ENCODE measurements at regions of chr9 and their contacts with region 1.

Region 1: DNA sequence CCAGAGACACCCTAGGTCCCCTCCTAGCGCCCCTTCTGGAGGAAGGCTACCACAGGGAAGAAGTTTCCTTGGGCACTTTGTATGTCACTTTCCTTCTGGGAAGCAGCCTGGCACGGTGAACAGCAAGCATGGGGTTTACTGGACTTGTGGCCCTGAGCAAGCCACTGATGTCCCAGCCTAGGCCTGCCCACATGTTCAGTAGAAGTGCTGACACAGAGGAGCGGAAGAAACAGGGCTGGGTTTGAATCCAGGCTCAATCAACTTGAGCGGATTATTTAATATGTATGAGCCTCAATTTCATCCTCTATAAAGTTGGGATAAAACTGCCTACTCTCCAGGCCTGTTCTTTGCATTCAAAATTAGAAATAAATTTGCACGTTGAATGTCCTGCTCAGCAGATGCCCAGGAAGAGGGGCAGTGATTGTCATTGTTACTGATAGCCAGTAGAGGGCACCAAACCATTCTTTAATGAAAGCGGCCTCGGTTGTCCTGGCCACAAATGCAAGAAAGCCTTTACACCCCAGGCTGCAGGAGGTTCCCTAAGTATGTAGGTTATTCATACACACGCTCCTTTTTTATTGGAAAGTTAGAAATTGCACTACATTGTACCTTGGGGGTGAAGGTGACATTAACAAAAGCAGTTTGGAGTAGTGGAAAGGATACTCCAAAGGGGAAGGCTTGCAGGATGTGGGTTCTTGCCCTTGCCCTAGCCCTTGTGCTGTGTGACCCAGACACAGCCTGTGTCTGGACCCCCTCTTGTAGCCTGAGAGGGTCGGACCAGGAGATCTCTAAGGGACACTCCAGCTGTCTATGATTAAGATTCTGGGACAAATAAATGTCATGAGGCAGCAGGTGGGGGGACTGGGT is 13.4 kb upstream of the XPA start:
- DNase-seq: peak in 10 of 14 experiments; percentile 14 to 81 (median 29)
- ATAC-seq: peak; percentile 82
- H3K4me3 ChIP-seq: no peak overlapping the region
- H3K4me3 Mint-ChIP-seq: no peak overlapping the region
- H3K27ac ChIP-seq: no peak overlapping the region
- H3K27ac Mint-ChIP-seq: no peak overlapping the region
- H3K4me1 ChIP-seq: peaks cover 25% of the 10 kb centered on the region
- H3K4me1 Mint-ChIP-seq: peaks cover 39% of the 10 kb centered on the region
- H3K27me3 ChIP-seq: peaks cover 0 to 5% of the 10 kb centered on the region in 2 experiments
- H3K27me3 Mint-ChIP-seq: peaks cover 15% of the 10 kb centered on the region
- CTCF ChIP-seq: peak; percentile 89

Region 2: DNA sequence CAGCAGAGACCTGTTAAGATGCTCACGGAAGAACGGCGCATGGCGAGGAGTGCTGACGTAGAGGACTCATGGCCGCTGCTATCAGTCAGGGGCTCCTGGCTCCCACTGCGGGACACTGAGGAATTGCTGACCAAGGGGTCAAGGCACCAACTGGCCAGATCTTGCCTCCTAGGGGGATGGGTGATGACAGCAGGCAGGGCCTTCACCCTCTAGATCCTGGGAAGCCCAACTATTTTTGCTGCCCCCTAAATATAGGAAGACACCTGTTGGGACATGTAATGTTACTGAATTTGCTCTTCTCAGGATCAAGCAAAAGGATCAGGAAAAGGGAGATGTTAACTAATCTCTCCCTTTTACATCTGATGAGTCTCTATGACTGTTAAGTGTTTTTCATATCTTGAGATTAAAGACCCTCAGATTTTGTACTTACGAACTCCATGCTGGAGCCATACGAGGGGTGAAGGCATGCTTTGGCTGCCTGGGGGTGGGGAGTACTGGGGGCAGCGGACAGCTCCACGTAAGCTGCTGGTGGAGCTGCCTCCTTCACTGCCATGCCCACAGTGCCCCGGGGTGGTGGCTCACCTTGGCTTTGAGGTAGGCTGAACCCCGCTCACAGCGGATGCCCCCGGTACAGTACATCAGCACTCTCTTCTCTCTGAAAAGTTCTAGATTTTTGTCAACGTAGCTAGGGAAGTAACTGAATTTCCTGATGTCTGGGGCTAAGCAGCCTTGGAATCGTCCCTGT is 105.5 kb before region 1 on chr9:
- CTCF ChIA-PET with region 1: no interaction called
- POLR2A ChIA-PET with region 1: no interaction called
- intact Hi-C with region 1: no loop called
- DNase-seq: no peak
- ATAC-seq: no peak
- H3K4me3 ChIP-seq: no peak overlapping the region
- H3K4me3 Mint-ChIP-seq: no peak overlapping the region
- H3K27ac ChIP-seq: no peak overlapping the region
- H3K27ac Mint-ChIP-seq: no peak overlapping the region
- H3K4me1 ChIP-seq: no peaks in the 10 kb centered on the region
- H3K4me1 Mint-ChIP-seq: no peaks in the 10 kb centered on the region
- H3K27me3 ChIP-seq: no peaks in the 10 kb centered on the region
- H3K27me3 Mint-ChIP-seq: no peaks in the 10 kb centered on the region
- CTCF ChIP-seq: no peak

Region 3: GRCh38 chr9:97744710-97745701 is 34.4 kb after region 1 on chr9:
- CTCF ChIA-PET with region 1: no interaction called
- POLR2A ChIA-PET with region 1: no interaction called
- intact Hi-C with region 1: no loop called
- DNase-seq: no peak
- ATAC-seq: no peak
- H3K4me3 ChIP-seq: no peak overlapping the region
- H3K4me3 Mint-ChIP-seq: no peak overlapping the region
- H3K27ac ChIP-seq: no peak overlapping the region
- H3K27ac Mint-ChIP-seq: no peak overlapping the region
- H3K4me1 ChIP-seq: peaks cover 10% of the 10 kb centered on the region
- H3K4me1 Mint-ChIP-seq: peaks cover 6% of the 10 kb centered on the region
- H3K27me3 ChIP-seq: peaks cover 41 to 52% of the 10 kb centered on the region in 2 experiments
- H3K27me3 Mint-ChIP-seq: peaks cover 76% of the 10 kb centered on the region
- CTCF ChIP-seq: no peak

Region 4: GRCh38 chr9:97820373-97820772 is 109.8 kb after region 1 on chr9:
- CTCF ChIA-PET with region 1: no interaction called
- POLR2A ChIA-PET with region 1: no interaction called
- intact Hi-C with region 1: no loop called
- DNase-seq: no peak
- ATAC-seq: no peak
- H3K4me3 ChIP-seq: no peak overlapping the region
- H3K4me3 Mint-ChIP-seq: no peak overlapping the region
- H3K27ac ChIP-seq: no peak overlapping the region
- H3K27ac Mint-ChIP-seq: no peak overlapping the region
- H3K4me1 ChIP-seq: no peaks in the 10 kb centered on the region
- H3K4me1 Mint-ChIP-seq: no peaks in the 10 kb centered on the region
- H3K27me3 ChIP-seq: peaks cover 27 to 44% of the 10 kb centered on the region in 2 experiments
- H3K27me3 Mint-ChIP-seq: peaks cover 70% of the 10 kb centered on the region
- CTCF ChIP-seq: no peak

Region 5: GRCh38 chr9:97900738-97901565 is 190.4 kb after region 1 on chr9:
- CTCF ChIA-PET with region 1: no interaction called
- POLR2A ChIA-PET with region 1: no interaction called
- intact Hi-C with region 1: loop called (anchors 1 to 2 kb)
- DNase-seq: peak in 4 of 14 experiments; percentile 57 to 79 (median 70)
- ATAC-seq: no peak
- H3K4me3 ChIP-seq: no peak overlapping the region
- H3K4me3 Mint-ChIP-seq: peak overlapping the region; percentile 22
- H3K27ac ChIP-seq: peak overlapping the region in 1 of 2 donors; percentile 7
- H3K27ac Mint-ChIP-seq: peak overlapping the region; percentile 96
- H3K4me1 ChIP-seq: peaks cover 54% of the 10 kb centered on the region
- H3K4me1 Mint-ChIP-seq: peaks cover 71% of the 10 kb centered on the region
- H3K27me3 ChIP-seq: no peaks in the 10 kb centered on the region
- H3K27me3 Mint-ChIP-seq: no peaks in the 10 kb centered on the region
- CTCF ChIP-seq: peak; percentile 81

Region 6: DNA sequence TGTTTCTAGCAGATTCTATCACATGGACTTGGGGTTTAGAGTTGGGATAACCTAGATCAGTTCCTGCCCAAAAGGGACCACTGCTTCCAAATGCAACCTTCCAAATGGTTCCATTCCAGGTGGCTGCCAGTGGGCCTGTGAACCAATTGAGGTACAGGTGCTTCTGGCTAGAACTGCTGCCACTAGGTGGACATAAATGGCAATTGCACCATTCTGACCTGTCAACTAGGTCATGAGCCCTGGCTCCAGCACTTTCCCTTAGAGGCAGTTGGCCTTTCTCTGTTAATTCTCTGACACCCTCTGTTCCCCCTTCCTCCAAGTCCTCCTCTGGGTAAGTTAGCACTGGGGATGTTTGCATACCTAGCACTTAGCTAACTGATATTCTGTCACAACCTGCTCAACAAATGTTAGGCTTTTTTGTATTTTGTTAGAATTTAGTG is 244.0 kb after region 1 on chr9:
- CTCF ChIA-PET with region 1: no interaction called
- POLR2A ChIA-PET with region 1: no interaction called
- intact Hi-C with region 1: loop called in 1 of 2 experiments (anchors 1 kb)
- DNase-seq: peak; percentile 38 to 84 (median 48)
- ATAC-seq: peak; percentile 93
- H3K4me3 ChIP-seq: no peak overlapping the region
- H3K4me3 Mint-ChIP-seq: no peak overlapping the region
- H3K27ac ChIP-seq: no peak overlapping the region
- H3K27ac Mint-ChIP-seq: no peak overlapping the region
- H3K4me1 ChIP-seq: peaks cover 7% of the 10 kb centered on the region
- H3K4me1 Mint-ChIP-seq: peaks cover 4% of the 10 kb centered on the region
- H3K27me3 ChIP-seq: no peaks in the 10 kb centered on the region
- H3K27me3 Mint-ChIP-seq: no peaks in the 10 kb centered on the region
- CTCF ChIP-seq: peak; percentile 81

Region 7: DNA sequence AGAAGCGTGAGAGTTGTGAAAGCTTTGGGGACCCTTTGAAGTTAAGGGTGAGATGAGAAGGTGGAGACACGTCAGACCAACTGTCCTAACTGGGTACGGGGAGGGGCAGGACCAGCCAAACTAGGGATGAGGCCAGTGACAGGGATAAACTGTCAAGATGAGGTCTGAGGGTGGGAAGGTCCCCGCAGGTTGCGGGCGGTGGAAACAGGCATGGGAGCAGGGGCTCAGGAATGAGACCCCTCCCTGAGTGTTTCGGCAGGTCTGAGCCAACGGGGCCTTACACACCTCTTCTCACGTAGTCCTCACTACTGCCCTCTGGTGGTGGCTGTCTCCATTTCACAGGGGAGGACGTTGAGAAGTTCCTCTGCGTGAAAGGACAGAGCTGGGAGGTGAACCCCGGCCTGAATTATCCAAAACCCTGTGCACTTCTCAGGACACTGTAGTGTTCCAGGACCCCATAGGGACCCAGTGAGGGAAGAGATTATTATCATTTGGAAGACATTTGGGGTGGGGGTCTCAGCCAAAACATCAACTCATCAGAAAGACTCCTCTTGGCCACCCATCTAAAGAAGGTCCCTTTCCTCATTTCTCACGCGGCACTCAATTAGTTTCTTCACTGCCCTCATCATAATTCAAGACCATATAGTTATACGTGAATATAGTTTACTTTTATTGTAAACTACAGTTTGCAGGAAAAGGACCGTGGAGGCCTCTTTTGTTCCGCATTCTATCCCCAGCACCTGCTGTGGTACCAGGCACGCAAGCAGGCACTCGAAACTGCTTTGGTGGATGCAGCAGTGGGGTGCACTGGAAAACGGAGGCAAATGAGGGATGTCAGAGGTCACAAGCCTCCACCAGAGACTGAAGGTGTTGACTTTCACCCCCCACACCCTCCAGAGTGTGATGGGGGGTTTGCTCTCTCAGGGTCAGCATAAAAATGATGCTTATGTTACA is 324.3 kb after region 1 on chr9:
- CTCF ChIA-PET with region 1: no interaction called
- POLR2A ChIA-PET with region 1: no interaction called
- intact Hi-C with region 1: loop called in 1 of 2 experiments (anchors 1 kb)
- DNase-seq: peak; percentile 82 to 97 (median 92)
- ATAC-seq: peak; percentile 99
- H3K4me3 ChIP-seq: no peak overlapping the region
- H3K4me3 Mint-ChIP-seq: no peak overlapping the region
- H3K27ac ChIP-seq: no peak overlapping the region
- H3K27ac Mint-ChIP-seq: no peak overlapping the region
- H3K4me1 ChIP-seq: peaks cover 6% of the 10 kb centered on the region
- H3K4me1 Mint-ChIP-seq: peaks cover 5% of the 10 kb centered on the region
- H3K27me3 ChIP-seq: no peaks in the 10 kb centered on the region
- H3K27me3 Mint-ChIP-seq: no peaks in the 10 kb centered on the region
- CTCF ChIP-seq: peak; percentile 86

Region 8: DNA sequence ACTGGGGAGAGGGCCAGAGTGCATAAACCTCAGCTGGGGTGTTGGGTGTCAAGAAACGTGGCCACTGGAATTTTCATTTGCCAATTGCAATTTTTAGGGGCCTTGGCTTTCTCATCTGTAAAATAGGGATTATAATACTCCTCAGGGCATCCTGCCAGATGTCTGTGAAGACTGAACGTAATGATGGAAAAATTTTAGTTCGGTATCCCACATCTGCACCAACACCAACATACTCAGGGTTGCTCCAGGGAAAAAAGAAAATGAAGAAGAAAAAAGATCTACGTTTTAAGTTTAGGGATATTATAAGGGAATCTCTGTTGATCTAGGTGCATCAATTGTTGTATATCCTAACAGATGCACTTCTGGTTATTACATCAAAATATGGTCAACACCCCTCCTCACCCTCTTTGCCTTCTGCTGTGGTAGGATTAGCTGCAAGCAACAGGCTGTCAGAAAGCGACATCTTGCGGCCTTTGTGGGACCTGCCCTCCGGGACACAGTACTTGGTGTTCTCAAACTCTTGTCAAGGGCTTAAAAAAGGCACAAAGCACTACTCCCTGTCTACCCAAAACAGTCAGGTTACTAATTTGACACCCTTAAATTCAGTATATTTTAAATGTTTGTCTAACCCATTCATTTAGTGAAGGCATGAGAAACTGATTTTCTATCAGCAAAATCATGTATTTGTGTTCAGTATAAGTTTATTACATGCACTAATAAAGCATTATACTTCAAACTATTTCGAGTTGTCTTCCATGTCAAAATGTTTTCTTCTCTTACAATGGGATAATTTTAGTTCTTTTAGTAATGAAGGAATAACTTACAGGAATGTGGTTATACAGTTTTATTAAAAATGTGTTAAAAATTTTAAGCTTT is 553.1 kb after region 1 on chr9:
- CTCF ChIA-PET with region 1: no interaction called
- POLR2A ChIA-PET with region 1: no interaction called
- intact Hi-C with region 1: loop called (anchors 1 to 2 kb)
- DNase-seq: peak; percentile 73 to 90 (median 82)
- ATAC-seq: peak; percentile 100
- H3K4me3 ChIP-seq: no peak overlapping the region
- H3K4me3 Mint-ChIP-seq: no peak overlapping the region
- H3K27ac ChIP-seq: no peak overlapping the region
- H3K27ac Mint-ChIP-seq: no peak overlapping the region
- H3K4me1 ChIP-seq: no peaks in the 10 kb centered on the region
- H3K4me1 Mint-ChIP-seq: no peaks in the 10 kb centered on the region
- H3K27me3 ChIP-seq: no peaks in the 10 kb centered on the region
- H3K27me3 Mint-ChIP-seq: peaks cover 9% of the 10 kb centered on the region
- CTCF ChIP-seq: peak; percentile 97

Region 9: GRCh38 chr9:98775831-98776441 is 1065.3 kb after region 1 on chr9:
- CTCF ChIA-PET with region 1: no interaction called
- POLR2A ChIA-PET with region 1: no interaction called
- intact Hi-C with region 1: loop called in 1 of 2 experiments (anchors 5 kb)
- DNase-seq: peak in 5 of 14 experiments; percentile 8 to 63 (median 40)
- ATAC-seq: peak; percentile 34
- H3K4me3 ChIP-seq: no peak overlapping the region
- H3K4me3 Mint-ChIP-seq: no peak overlapping the region
- H3K27ac ChIP-seq: no peak overlapping the region
- H3K27ac Mint-ChIP-seq: no peak overlapping the region
- H3K4me1 ChIP-seq: no peaks in the 10 kb centered on the region
- H3K4me1 Mint-ChIP-seq: no peaks in the 10 kb centered on the region
- H3K27me3 ChIP-seq: no peaks in the 10 kb centered on the region
- H3K27me3 Mint-ChIP-seq: no peaks in the 10 kb centered on the region
- CTCF ChIP-seq: peak; percentile 33